ENCODE measurements at regions of chr17 and their contacts with region 1.

Region 1: GRCh38 chr17:28041068-28041843 is 1.2 kb upstream of the NLK start:
- DNase-seq: peak; percentile 100
- H3K4me3 Mint-ChIP-seq: peak overlapping the region; percentile 88
- H3K27ac Mint-ChIP-seq: peak overlapping the region; percentile 87
- H3K4me1 Mint-ChIP-seq: peaks cover 48% of the 10 kb centered on the region
- H3K27me3 Mint-ChIP-seq: peaks cover 9% of the 10 kb centered on the region

Region 2: GRCh38 chr17:27473748-27474609 is 567.3 kb before region 1 on chr17:
- intact Hi-C with region 1: loop called (anchors 10 kb)
- DNase-seq: peak; percentile 93
- H3K4me3 Mint-ChIP-seq: peak overlapping the region; percentile 61
- H3K27ac Mint-ChIP-seq: peak overlapping the region; percentile 95
- H3K4me1 Mint-ChIP-seq: peaks cover 85% of the 10 kb centered on the region
- H3K27me3 Mint-ChIP-seq: peaks cover 1% of the 10 kb centered on the region

Region 3: DNA sequence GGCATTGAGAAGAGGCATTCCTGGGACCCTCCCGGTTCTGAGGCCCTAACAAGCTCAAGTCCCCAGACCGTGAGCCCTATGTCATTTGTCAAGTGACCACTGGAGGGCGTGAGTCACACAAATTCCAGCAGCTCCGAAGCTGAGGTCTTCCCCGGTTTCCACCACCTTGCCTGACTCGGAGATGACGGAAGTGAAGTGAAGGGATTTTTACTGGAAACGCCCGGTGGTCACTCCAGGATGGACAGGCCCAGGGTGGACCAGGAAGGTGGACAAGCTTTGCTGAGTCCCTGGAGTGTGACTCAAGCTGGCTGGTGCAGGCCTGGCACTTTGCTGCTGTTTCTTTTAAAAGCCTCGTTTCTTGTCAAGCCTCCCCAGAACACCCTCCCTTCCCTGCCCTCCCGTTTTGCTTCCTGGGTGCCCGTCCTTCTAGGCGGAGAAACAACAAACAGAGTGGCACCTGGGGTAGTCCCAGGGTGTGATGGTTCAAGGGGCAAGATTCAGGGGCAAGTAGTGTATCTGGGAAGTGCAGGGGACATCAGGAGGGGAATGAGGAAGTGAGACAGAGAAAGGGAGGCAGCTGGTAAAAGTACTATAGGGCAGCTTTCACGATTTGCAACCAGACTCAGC is 235.6 kb before region 1 on chr17:
- intact Hi-C with region 1: loop called (anchors 1 kb)
- DNase-seq: peak; percentile 94
- H3K4me3 Mint-ChIP-seq: peak overlapping the region; percentile 60
- H3K27ac Mint-ChIP-seq: peak overlapping the region; percentile 92
- H3K4me1 Mint-ChIP-seq: peaks cover 43% of the 10 kb centered on the region
- H3K27me3 Mint-ChIP-seq: no peaks in the 10 kb centered on the region

Region 4: DNA sequence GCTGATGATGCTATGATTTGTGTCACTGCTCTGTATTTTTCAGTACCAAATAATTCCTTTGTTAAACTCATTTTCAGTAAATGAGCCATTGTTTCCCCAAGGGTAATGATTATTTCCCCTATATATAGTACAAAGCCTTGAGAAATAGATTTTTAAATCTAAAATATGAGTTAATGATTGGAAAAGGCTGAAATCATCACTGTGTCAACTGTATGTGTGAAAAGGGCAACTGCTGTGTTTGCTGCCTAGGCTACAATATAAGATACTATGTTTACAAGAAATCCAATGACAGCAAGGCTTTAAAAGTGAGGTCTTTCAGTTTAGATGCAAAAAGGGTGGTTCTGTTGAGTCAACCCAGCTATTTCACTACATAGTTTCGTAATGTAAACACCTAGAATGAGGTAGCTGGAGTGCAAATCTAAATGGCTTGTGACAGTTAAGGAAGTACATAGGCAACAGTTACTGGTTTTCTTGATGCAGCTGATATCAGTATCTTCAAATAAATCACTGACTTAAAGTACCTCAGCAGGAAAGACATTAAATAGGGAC is 16.5 kb after region 1 on chr17:
- intact Hi-C with region 1: loop called (anchors 1 kb)
- DNase-seq: no peak
- H3K4me3 Mint-ChIP-seq: no peak overlapping the region
- H3K27ac Mint-ChIP-seq: peak overlapping the region; percentile 72
- H3K4me1 Mint-ChIP-seq: peaks cover 24% of the 10 kb centered on the region
- H3K27me3 Mint-ChIP-seq: no peaks in the 10 kb centered on the region

Region 5: DNA sequence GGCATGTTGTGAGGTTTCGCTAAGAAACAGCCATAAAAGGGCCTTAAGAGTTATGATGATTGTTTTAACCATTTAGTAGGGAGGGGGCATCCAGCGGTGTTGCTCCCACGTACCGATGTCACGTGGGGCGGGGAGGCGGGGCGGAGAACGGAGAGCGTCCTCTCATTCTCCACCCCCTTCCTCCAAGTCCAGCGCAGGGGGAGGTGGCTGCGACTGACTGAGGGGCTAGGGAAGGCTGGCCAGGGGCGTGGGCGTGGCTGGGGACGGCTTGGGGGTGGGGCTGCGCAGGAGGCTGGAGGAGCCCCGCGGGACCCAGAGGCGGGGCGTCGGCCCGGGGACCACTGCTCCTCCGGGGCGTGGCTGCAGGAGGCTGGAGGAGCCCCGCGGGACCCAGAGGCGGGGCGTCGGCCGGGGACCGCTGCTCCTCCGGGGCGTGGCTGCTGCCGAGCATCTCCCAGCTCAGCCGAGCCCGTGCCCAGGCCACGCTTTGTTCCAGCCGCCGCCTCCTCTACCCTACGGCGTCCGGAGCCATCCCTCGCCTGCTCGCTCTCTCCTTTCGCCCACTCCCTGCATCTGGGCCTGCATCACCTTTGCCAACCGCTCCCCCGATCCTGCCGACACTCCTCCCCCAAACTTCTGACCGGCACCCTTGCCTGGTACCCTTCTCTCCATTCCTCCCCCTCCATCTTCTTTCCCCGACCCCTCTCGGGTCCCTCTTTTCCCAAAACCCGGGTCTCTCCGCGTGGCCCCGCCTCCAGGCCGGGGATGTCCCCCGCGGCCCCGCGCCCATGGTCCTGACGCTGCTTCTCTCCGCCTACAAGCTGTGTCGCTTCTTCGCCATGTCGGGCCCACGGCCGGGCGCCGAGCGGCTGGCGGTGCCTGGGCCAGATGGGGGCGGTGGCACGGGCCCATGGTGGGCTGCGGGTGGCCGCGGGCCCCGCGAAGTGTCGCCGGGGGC is 330.3 kb after region 1 on chr17 and contains the start of gene SARM1:
- intact Hi-C with region 1: loop called (anchors 1 kb)
- DNase-seq: peak; percentile 96
- H3K4me3 Mint-ChIP-seq: peak within 1 kb of the TSS; percentile 85
- H3K27ac Mint-ChIP-seq: peak within 1 kb of the TSS; percentile 91
- H3K4me1 Mint-ChIP-seq: peaks cover 21% of the 10 kb centered on the region
- H3K27me3 Mint-ChIP-seq: no peaks in the 10 kb centered on the region
- total RNA-seq, gene SARM1: 36.4 and 37.7 TPM in 2 replicates